Sigmoid colon (tissue), 7 donors: ENCODE measurements at regions of chr7 and their contacts with region 1.

Region 1: DNA sequence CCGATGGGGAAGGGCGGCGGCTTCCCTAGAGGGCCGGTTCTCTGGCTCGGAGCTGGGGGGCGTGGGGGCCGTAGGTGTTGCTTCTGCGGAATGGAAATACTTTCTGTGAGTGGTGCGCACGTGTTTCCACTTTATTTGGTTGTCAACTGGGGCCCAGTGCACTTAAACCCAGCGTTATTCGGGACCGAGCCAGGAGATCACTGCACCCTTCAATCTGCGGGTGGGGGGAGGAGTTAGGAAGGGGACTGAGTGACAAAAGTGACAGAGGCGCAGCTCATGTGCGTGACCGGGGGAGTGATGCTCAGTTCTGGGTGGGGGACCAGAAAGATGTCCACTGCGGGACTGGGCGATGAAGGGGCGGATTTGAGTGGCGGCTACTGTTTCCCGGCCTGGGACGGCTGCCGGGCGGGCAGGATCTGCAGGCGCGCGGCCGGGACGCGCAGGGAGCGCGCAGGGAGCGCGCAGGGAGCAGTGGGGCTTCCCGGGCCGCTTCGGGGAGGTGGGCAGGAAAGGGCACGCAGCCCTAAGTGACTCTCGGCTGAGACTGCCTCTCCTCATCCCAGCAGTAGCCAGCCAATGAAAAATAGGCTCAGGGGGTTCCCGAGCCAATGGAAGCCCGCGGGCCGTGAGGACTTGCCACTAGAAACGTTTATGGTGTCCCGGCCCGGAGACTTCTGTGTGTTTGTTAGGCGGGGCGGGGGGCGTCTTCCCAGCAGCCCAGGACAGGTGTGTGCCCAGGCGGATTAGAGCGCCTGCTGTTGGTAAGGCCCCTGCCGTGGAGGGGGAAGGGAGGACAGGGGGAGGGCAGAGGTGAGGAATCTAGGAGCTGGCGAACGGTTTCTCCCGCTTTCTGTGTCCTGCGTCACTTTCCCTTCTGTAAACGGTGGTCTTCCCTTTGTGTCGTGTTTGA is 54.3 kb upstream of the KDM7A start:
- DNase-seq: peak; percentile 76
- H3K4me3 ChIP-seq: peak overlapping the region; percentile 31 to 60 (median 50)
- H3K27ac ChIP-seq: peak overlapping the region in 3 of 4 donors; percentile 41 to 56 (median 45)
- H3K4me1 ChIP-seq: peaks cover 0 to 24% (median 19%) of the 10 kb centered on the region in 4 donors
- H3K27me3 ChIP-seq: peaks cover 0 to 23% (median 0%) of the 10 kb centered on the region in 3 donors
- CTCF ChIP-seq: no peak
- EP300 ChIP-seq: no peak
- POLR2A ChIP-seq: peak in 1 of 2 donors; percentile 13

Region 2: DNA sequence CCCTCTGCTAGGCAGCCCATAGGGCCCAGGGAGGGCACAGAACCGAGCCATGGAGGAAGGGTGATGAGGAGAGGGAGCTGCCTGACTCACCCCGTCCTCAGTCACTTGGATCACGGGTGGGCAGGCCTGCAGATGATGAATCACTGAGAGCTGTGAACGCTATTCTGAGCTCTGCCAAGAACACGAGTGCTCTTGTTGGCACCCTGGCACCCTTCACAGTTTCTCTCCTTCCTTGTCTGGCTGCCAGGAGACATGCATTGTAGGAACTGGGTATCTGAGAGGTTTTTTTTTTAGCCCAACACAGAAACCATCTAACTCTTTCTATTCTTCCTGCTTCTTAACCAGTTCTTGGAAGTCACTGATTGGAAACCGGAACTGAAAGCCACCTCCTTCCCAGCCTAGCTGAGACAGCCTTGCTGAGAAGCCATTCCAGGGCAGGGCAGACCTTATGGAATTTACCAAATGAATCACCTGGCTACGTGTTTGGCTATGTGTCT is 85.1 kb after region 1 on chr7:
- intact Hi-C with region 1: loop called (anchors 2 kb)
- DNase-seq: peak; percentile 94
- H3K4me3 ChIP-seq: peak overlapping the region in 3 of 4 donors; percentile 19 to 26 (median 21)
- H3K27ac ChIP-seq: peak overlapping the region; percentile 82 to 84 (median 82)
- H3K4me1 ChIP-seq: peaks cover 0 to 28% (median 26%) of the 10 kb centered on the region in 4 donors
- H3K27me3 ChIP-seq: no peaks in the 10 kb centered on the region
- CTCF ChIP-seq: no peak
- EP300 ChIP-seq: peak in 1 of 4 donors; percentile 65
- POLR2A ChIP-seq: no peak

Region 3: GRCh38 chr7:140375892-140376730 is 145.0 kb after region 1 on chr7:
- intact Hi-C with region 1: no loop called
- DNase-seq: no peak
- H3K4me3 ChIP-seq: no peak overlapping the region
- H3K27ac ChIP-seq: no peak overlapping the region
- H3K4me1 ChIP-seq: no peaks in the 10 kb centered on the region
- H3K27me3 ChIP-seq: no peaks in the 10 kb centered on the region
- CTCF ChIP-seq: no peak
- EP300 ChIP-seq: no peak
- POLR2A ChIP-seq: no peak

Region 4: GRCh38 chr7:140456551-140457051 is 225.5 kb after region 1 on chr7:
- intact Hi-C with region 1: no loop called
- DNase-seq: no peak
- H3K4me3 ChIP-seq: no peak overlapping the region
- H3K27ac ChIP-seq: no peak overlapping the region
- H3K4me1 ChIP-seq: no peaks in the 10 kb centered on the region
- H3K27me3 ChIP-seq: no peaks in the 10 kb centered on the region
- CTCF ChIP-seq: no peak
- EP300 ChIP-seq: no peak
- POLR2A ChIP-seq: no peak